MCF 10A (cell line): ENCODE measurements at regions of chr1 and their contacts with region 1.

Region 1: GRCh38 chr1:50774759-50775351 is 185.2 kb downstream of the FAF1 start:
- DNase-seq: peak; percentile 74
- H3K4me3 Mint-ChIP-seq: no peak overlapping the region
- H3K27ac Mint-ChIP-seq: no peak overlapping the region
- H3K4me1 Mint-ChIP-seq: no peaks in the 10 kb centered on the region
- H3K27me3 Mint-ChIP-seq: no peaks in the 10 kb centered on the region
- CTCF ChIP-seq: peak; percentile 64

Region 2: GRCh38 chr1:50422946-50423669 is 351.7 kb before region 1 on chr1 and contains the start of gene DMRTA2:
- CTCF ChIA-PET with region 1: no interaction called
- POLR2A ChIA-PET with region 1: no interaction called
- intact Hi-C with region 1: no loop called
- DNase-seq: no peak
- H3K4me3 Mint-ChIP-seq: peak within 1 kb of the TSS; percentile 20
- H3K27ac Mint-ChIP-seq: no peak within 1 kb of the TSS
- H3K4me1 Mint-ChIP-seq: no peaks in the 10 kb centered on the region
- H3K27me3 Mint-ChIP-seq: peaks cover 14% of the 10 kb centered on the region
- CTCF ChIP-seq: no peak
- total RNA-seq, gene DMRTA2: not detected in 2 replicates

Region 3: DNA sequence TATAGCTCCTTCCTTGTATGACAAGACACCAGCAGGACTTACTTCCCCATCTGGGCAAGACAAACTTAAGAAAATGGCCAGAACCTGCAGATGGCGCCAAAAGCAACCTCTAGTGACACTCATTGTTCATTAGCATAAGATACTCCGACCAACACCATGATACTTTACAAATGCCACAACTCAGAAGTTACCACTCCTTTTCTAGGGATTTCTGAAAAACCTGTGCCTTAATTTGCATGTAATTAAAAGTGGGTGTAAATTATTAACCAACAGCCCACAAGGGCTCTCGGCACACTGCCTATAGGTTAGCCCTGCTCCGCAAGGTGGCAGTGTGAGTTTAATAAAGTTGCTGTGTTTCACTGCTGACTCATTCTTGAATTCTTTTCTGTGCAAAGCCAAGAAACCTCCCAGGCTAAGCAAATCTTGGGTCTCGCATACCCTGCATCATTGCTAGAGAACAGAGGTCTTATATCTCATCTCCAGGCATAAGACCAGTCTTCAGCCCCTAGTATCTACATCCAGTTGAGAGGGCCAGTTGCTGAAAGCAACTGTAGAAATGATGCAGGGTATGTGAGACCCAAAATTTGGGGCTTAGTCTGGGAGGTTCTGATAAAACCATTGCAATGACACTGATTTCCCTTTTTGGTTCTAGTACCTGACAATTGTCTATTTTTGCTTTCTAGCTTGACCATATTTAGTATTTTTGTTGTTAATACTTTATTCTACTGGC is 98.8 kb after region 1 on chr1:
- CTCF ChIA-PET with region 1: interaction called, 11 read pairs
- POLR2A ChIA-PET with region 1: no interaction called
- intact Hi-C with region 1: no loop called
- DNase-seq: peak; percentile 84
- H3K4me3 Mint-ChIP-seq: peak overlapping the region; percentile 67
- H3K27ac Mint-ChIP-seq: peak overlapping the region; percentile 27
- H3K4me1 Mint-ChIP-seq: no peaks in the 10 kb centered on the region
- H3K27me3 Mint-ChIP-seq: no peaks in the 10 kb centered on the region
- CTCF ChIP-seq: peak; percentile 78

Region 4: DNA sequence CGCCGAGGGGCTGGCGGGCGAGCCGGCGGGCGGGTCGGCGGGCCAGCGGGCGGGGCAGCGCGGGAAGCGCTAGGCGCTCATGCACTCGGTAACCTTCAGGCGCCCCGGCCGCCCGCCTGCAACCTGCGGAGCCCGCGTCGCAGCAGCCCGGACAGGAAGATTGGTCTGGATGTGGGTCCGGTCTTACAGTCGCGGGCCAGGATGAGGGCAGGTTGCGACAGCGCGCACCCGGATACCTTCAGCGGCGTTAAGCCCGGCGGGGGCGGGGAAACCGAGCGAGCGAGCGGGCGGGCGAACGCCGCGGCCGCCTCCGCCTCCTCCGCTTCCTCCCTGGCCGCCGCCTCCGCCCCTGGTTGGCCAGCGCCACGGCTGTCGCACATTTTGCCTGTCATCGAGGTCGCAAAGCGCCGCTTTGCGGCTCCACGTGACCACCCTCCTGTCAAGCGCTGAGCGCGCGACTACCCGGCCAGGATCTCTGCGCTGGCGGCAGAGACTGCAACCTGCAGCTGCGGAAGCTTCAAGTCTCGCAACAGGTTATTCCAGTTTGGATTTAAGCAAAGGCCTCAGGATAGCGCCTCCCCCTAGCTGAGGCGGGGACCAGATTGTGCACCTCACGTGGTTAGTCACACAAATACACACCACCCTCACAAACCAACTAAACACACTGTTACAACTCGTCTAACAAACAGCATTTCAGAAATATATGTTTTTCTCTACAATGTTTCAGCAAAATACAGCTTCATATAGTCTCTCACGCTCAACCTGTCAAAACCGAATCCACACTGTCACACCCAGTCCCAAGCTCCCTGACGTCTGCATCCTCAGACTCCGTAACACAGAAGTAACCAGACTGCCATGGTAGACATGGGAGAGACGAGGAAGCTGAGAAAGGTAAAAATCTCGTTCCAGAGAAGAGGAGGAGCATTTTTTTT is 185.3 kb after region 1 on chr1 and contains the start of gene FAF1:
- CTCF ChIA-PET with region 1: interaction called, 6 read pairs
- POLR2A ChIA-PET with region 1: interaction called, 12 read pairs
- intact Hi-C with region 1: loop called (anchors 10 kb)
- DNase-seq: peak; percentile 96
- H3K4me3 Mint-ChIP-seq: peak within 1 kb of the TSS; percentile 76
- H3K27ac Mint-ChIP-seq: peak within 1 kb of the TSS; percentile 1
- H3K4me1 Mint-ChIP-seq: peaks cover 11% of the 10 kb centered on the region
- H3K27me3 Mint-ChIP-seq: no peaks in the 10 kb centered on the region
- CTCF ChIP-seq: no peak
- total RNA-seq, gene FAF1: 74.4 and 93.2 TPM in 2 replicates

Region 5: DNA sequence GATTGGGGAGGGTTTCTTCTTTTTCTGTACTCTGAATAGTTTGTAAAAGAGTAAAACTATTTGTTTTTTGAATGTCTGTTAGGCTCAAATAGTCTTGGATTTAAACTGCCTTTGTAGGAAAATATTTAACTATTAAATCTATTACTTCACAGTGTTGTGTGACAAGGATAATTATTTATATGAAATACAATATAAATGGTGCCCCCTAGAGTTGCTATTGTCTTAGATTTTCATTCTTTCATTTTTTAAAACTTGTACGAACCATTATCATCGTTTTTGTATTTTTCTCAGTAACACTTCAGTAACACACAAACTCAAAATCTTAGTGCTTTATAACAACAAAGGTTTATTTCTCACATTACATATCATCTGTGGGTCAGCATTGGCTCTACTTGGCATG is 364.6 kb after region 1 on chr1:
- CTCF ChIA-PET with region 1: no interaction called
- POLR2A ChIA-PET with region 1: no interaction called
- intact Hi-C with region 1: loop called (anchors 2 kb)
- DNase-seq: no peak
- H3K4me3 Mint-ChIP-seq: peak overlapping the region; percentile 18
- H3K27ac Mint-ChIP-seq: no peak overlapping the region
- H3K4me1 Mint-ChIP-seq: no peaks in the 10 kb centered on the region
- H3K27me3 Mint-ChIP-seq: no peaks in the 10 kb centered on the region
- CTCF ChIP-seq: peak; percentile 15

Region 6: GRCh38 chr1:51296383-51297357 is 521.8 kb after region 1 on chr1:
- CTCF ChIA-PET with region 1: interaction called, 3 read pairs
- POLR2A ChIA-PET with region 1: interaction called, 4 read pairs
- intact Hi-C with region 1: loop called (anchors 10 kb)
- DNase-seq: peak; percentile 83
- H3K4me3 Mint-ChIP-seq: peak overlapping the region; percentile 41
- H3K27ac Mint-ChIP-seq: no peak overlapping the region
- H3K4me1 Mint-ChIP-seq: peaks cover 13% of the 10 kb centered on the region
- H3K27me3 Mint-ChIP-seq: no peaks in the 10 kb centered on the region
- CTCF ChIP-seq: peak; percentile 98